ENCODE measurements at regions of chr15 and their contacts with region 1.

Region 1: DNA sequence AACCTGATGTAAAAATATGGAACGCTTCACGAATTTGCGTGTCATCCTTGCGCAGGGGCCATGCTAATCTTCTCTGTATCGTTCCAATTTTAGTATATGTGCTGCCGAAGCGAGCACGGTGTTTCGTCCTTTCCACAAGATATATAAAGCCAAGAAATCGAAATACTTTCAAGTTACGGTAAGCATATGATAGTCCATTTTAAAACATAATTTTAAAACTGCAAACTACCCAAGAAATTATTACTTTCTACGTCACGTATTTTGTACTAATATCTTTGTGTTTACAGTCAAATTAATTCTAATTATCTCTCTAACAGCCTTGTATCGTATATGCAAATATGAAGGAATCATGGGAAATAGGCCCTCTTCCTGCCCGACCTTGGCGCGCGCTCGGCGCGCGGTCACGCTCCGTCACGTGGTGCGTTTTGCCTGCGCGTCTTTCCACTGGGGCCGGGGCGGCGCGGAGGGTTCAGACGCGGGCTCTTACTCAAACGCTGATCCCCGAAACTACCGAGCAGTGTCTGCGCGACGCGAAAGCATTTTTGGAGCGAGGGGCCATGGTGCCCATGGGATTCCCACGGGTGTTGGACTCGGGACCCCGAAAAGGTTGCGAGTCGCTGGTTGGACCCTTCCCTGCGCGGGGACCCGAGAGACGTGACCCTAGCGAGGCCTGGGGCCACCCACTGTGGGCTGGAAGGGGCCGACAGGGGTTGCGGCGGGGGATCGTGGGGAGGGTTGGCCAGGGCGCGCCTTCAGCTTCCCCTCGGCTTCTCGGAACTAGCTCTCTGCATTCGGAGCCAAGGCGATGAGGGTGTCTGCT is at the start of gene RNU6-1:
- DNase-seq: peak; percentile 95
- H3K4me3 Mint-ChIP-seq: peak within 1 kb of the TSS; percentile 87
- H3K27ac Mint-ChIP-seq: peak within 1 kb of the TSS; percentile 88
- H3K4me1 Mint-ChIP-seq: peaks cover 26% of the 10 kb centered on the region
- H3K27me3 Mint-ChIP-seq: peaks cover 29% of the 10 kb centered on the region
- total RNA-seq, gene RNU6-1: not detected in 2 replicates

Region 2: GRCh38 chr15:66946578-66947164 is 893.5 kb before region 1 on chr15:
- intact Hi-C with region 1: loop called (anchors 2 kb)
- DNase-seq: peak; percentile 64
- H3K4me3 Mint-ChIP-seq: no peak overlapping the region
- H3K27ac Mint-ChIP-seq: no peak overlapping the region
- H3K4me1 Mint-ChIP-seq: peaks cover 24% of the 10 kb centered on the region
- H3K27me3 Mint-ChIP-seq: peaks cover 5% of the 10 kb centered on the region

Region 3: DNA sequence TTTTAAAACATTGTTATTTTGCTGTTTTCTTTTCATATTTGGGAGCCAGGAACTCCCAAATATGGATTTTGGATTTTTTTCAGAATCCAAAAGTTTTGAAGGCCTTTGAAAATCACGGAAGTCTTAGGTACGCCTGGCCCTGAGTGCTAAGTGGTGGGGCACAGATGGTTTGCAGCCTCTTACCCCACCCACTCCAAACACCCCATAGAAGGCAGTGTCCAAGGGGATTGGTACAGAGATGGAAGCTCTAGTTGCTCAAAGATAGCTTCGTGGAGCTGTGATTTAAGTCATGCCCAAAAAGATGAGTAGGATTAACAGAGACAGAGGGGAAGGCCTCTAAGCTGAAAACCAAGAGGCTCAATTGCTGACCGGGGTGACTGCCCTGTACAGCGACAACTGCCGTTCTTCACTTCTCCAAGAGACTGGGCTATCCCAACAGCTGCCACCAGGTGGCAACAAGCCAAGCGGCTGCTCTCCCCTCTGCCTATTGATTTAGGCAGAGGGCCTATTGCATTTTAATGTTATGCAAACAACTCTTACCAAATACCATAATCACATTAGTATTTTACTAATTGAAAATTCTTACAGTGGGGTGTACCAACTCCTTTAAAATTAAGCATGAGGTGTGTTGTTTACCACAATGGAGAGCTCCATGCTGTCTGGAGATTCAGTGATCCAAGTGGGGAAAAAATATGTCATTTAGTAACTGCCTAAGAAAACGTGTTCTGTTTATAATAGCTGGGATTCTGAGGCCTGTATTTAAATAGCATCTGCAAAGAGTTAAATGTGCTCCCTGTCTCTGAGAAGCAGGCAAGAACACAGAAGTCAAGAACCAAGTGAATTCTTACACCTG is 383.2 kb before region 1 on chr15:
- intact Hi-C with region 1: loop called (anchors 1 kb)
- DNase-seq: peak; percentile 67
- H3K4me3 Mint-ChIP-seq: no peak overlapping the region
- H3K27ac Mint-ChIP-seq: no peak overlapping the region
- H3K4me1 Mint-ChIP-seq: no peaks in the 10 kb centered on the region
- H3K27me3 Mint-ChIP-seq: peaks cover 11% of the 10 kb centered on the region

Region 4: DNA sequence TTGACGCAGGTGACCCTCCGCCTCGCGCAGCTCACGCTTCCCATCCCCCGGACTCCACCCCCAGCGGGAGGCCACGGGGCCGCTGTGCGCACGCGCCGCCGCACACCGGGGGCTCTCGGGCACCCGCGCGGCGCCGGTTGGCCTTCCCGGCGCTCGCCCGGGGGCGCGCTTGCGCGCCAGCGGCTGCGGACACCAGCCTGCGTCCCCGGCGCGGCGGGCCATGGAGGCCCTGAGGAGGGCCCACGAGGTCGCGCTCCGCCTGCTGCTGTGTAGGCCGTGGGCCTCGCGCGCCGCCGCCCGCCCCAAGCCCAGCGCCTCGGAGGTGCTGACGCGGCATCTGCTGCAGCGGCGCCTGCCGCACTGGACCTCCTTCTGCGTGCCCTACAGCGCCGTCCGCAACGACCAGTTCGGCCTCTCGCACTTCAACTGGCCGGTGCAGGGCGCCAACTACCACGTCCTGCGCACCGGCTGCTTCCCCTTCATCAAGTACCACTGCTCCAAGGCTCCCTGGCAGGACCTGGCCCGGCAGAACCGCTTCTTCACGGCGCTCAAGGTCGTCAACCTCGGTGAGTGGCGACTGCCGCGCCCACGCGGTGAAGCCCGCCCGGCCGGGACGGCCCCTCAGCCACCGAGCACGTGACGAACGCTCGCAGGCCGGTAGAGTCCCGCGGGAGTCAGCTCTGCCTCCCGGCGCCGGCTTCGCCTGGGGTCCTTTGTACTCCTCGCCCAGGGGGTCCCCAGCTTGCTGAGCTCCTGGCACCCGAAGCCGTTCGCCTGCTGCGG is 318.9 kb before region 1 on chr15 and contains the start of gene C15orf61:
- intact Hi-C with region 1: loop called (anchors 1 kb)
- DNase-seq: peak; percentile 84
- H3K4me3 Mint-ChIP-seq: peak within 1 kb of the TSS; percentile 95
- H3K27ac Mint-ChIP-seq: peak within 1 kb of the TSS; percentile 98
- H3K4me1 Mint-ChIP-seq: peaks cover 25% of the 10 kb centered on the region
- H3K27me3 Mint-ChIP-seq: no peaks in the 10 kb centered on the region
- total RNA-seq, gene C15orf61: 6.6 and 6.9 TPM in 2 replicates

Region 5: DNA sequence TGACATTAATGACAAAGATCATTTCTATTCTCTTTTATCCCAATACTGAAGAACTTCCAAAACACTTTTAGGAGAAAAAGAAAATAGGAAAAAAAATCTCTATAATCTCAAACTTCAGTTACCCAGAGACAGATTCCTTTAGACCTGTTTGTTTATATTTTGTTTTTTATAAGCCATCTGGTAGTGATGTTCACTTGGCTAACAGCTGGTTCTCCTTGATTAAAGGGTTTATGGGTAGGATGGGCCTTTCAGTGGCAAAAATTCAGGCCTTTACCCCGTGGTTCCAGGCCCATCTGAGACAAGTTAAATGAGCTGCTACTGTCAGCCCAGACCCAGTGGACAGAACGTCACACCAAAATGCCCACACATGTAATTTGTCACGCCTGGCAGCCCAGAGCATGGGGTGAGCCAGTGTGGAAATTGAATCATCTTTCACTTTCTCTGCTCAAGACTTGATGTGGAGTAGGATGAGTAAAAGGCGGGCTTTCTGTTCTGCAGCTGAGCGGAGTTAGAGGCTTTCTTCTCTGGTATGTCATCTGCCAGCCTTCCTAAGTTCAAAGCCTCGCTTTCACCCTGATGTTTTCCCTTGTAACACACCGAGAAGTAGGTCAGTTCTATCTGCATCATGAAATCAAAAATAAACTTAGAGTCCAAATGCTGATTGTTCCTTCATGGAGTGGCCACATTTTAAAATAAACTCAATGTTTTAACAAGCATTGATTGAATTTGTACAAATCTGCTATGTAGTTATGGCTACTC is 77.3 kb before region 1 on chr15:
- intact Hi-C with region 1: loop called (anchors 5 kb)
- DNase-seq: peak; percentile 37
- H3K4me3 Mint-ChIP-seq: peak overlapping the region; percentile 24
- H3K27ac Mint-ChIP-seq: peak overlapping the region; percentile 41
- H3K4me1 Mint-ChIP-seq: peaks cover 46% of the 10 kb centered on the region
- H3K27me3 Mint-ChIP-seq: peaks cover 20% of the 10 kb centered on the region

Region 6: GRCh38 chr15:68229386-68230156 is 389.4 kb after region 1 on chr15 and contains the start of gene CLN6:
- intact Hi-C with region 1: loop called (anchors 1 kb)
- DNase-seq: peak; percentile 73
- H3K4me3 Mint-ChIP-seq: peak within 1 kb of the TSS; percentile 94
- H3K27ac Mint-ChIP-seq: peak within 1 kb of the TSS; percentile 96
- H3K4me1 Mint-ChIP-seq: peaks cover 40% of the 10 kb centered on the region
- H3K27me3 Mint-ChIP-seq: no peaks in the 10 kb centered on the region
- total RNA-seq, gene CLN6: 95.3 and 98.3 TPM in 2 replicates

Measured in activated T-helper 1 cell treated with anti-CD3 and anti-CD28 coated beads, Interleukin-12 subunit alpha, Interleukin-12 subunit beta, Interleukin-2, Interleukin-4 antibody, amounts not matched to agents 30 ng/mL and 10 ng/mL and 1 ng/mL, durations not matched to agents 14 hours and 24 hours and 36 hours (primary cell).